HEK293T (cell line): ENCODE measurements at regions of chr2 and their contacts with region 1.

Region 1: GRCh38 chr2:101387151-101387807 is at the start of gene CREG2:
- DNase-seq: peak; percentile 82

Region 2: GRCh38 chr2:101349893-101350662 is 37.2 kb before region 1 on chr2:
- CTCF ChIA-PET with region 1: interaction called, 15 read pairs
- POLR2A ChIA-PET with region 1: interaction called, 3 read pairs
- DNase-seq: no peak